Right ventricle myocardium inferior (tissue), 1 donor: ENCODE measurements at regions of chr6 and their contacts with region 1.

Region 1: DNA sequence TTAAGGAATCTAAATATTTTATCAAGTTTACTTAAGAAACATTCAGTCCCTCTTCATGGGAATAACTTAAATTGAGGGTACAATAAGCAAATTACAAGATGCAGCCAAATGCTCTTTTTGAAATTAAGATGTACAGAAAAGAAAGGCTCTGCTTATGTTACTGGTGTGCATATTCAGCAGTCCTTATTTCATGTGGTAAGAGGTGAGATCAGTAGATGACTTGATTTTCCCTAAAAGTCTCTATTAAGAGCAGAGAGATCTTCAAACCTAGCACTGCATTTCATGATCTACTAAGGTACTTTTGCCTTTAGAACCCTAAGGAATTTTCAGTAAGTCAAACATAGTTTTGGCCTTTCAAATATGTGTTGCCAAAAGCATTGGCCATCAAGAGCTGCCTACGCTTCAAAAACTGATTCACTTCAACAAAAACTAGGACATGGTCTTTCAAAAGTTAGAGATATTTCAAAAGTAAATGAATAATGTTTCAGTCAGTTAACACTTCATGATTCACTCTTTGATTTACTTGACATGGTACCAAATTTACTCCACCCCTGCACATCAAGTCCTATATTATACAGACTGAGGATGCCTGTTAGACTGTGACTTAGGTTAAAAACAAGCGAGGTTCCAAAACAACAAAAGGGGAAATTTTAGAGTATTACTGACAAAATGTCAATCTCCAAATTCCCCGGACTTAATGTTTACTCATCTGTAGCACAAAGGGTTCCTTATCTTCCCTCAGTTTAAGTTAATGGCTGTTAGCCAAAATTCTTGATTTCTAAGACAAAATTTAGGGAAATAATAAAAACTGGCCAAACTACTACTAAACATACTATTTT is 19.2 kb downstream of the C6orf62 start:
- DNase-seq: no peak
- ATAC-seq: no peak

Region 2: GRCh38 chr6:23905133-23905815 is 794.5 kb before region 1 on chr6:
- intact Hi-C with region 1: no loop called
- DNase-seq: no peak
- ATAC-seq: peak; percentile 13

Region 3: DNA sequence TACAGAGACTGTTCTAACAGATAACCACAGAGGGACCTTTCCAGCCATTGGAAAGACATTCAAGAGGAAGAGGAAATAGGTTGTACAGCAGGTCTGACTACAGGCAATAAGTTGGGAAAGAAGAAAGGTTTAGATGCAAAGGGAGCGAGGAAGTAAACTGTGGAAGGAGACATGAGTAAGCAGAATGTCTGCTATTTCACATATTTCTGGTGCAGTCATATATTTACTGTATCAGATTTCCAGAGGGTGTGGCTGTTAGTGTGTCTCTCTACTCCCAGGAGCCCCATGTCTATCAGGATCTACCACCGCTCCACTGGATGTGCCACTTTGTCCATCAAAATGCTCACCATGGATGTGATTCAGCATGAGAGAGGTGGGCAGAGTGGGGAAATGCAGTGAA is 271.1 kb before region 1 on chr6:
- intact Hi-C with region 1: loop called (anchors 10 kb)
- DNase-seq: no peak
- ATAC-seq: no peak

Region 4: DNA sequence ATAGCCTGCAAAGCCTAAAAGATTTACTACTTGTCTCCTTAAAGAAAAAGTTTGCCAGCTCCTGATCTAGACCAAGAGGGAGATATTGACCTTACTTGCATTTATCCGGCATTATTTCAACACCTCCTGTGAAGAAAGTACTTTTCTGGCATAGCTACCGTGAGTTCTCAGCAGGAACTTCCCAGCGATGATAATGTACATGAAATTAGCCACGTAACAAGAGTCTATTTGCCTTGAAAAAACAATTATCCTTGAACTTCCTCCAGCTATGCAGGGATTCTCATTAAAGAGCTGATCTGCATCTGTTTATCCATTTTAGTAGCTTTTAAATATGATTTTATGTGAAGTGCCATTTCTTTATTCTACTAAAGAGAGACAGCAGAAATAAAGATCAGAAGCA is 163.3 kb before region 1 on chr6:
- intact Hi-C with region 1: no loop called
- DNase-seq: no peak
- ATAC-seq: no peak

Region 5: GRCh38 chr6:25851961-25852360 is 1152.2 kb after region 1 on chr6:
- intact Hi-C with region 1: no loop called
- DNase-seq: no peak
- ATAC-seq: no peak